ENCODE measurements at regions of chr2 and their contacts with region 1.

Region 1: DNA sequence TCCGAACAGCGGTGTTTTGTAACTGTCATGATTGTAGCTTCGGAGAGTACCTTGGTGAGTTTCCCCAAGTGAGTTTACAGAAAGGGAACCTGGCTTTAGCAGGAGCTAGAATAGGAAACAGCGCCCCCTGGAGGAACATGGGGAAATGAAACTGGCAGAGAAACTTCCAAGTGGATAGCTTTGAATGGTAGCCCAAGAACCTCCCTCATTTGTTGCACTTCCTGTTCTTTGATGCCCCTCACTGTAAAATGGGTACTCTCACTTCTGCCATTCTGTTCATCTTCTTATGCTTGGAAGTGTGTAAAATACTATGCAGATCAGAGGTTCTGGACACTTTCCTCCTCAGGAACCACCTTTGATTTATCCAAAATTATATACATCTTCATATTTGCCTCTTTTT is 36.2 kb downstream of the CHST10 start:
- DNase-seq: peak; percentile 74 to 92
- H3K4me3 ChIP-seq: no peak overlapping the region
- H3K4me1 ChIP-seq: no peaks in the 10 kb centered on the region
- H3K27me3 ChIP-seq: no peaks in the 10 kb centered on the region

Region 2: DNA sequence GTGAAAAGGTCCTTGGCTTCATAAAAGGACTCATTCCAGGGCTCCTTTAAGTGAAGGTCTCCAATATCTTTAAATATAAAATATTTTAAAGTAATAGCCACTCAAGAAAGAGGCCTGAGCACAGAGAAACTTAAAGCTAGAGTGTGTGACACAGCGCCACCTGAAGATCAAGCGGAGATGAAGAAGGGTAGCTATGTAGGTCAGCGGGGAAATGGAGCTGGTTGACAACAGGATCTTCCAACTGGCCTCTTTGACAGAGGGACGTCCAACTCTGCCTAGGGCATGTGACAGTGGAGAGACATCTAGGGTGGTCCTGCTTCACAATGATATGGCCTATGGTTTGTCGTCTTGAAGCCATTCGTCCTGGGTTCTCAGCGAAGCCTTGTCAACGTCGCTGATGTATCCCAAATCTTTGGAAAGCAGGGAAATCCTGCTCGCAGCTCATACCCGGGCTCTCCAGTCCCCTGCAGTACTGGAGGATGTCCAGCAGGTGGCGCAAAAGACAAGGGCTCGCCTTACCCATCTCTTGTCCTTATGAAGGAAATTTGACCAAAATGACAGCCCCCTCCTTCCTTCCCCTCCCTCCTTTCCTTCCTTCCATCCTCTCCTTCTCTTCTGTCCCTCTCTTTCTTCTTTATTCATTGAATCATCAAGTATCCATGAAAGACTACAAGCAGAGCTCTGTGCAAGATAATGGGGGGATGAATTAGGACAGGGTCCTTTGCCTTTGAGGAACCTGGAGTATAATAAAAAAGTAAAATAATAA is 118.5 kb before region 1 on chr2:
- in situ Hi-C with region 1: loop called (anchors 5 kb)
- DNase-seq: peak; percentile 59 to 83
- H3K4me3 ChIP-seq: no peak overlapping the region
- H3K4me1 ChIP-seq: 0 out of 2 replicates have a peak, but pooled peaks cover 5% of the 10 kb centered on the region
- H3K27me3 ChIP-seq: no peaks in the 10 kb centered on the region

Measured in HAP-1 (cell line).